ENCODE measurements at regions of chr4 and their contacts with region 1.

Region 1: GRCh38 chr4:128809477-128810330 is at the start of gene JADE1:
- DNase-seq: peak; percentile 95
- ATAC-seq: peak; percentile 64
- H3K4me3 ChIP-seq: peak within 1 kb of the TSS; percentile 84
- H3K27ac ChIP-seq: peak within 1 kb of the TSS; percentile 95
- H3K4me1 ChIP-seq: no peaks in the 10 kb centered on the region
- H3K27me3 ChIP-seq: no peaks in the 10 kb centered on the region
- CTCF ChIP-seq: peak; percentile 93
- POLR2A ChIP-seq: peak; percentile 59
- RAD21 ChIP-seq: peak; percentile 85
- total RNA-seq, gene JADE1: 32.6 and 32.8 TPM in 2 replicates

Region 2: GRCh38 chr4:127000110-127000509 is 1809.6 kb before region 1 on chr4:
- CTCF ChIA-PET with region 1: no interaction called
- POLR2A ChIA-PET with region 1: no interaction called
- dilution Hi-C with region 1: no loop called
- in situ Hi-C with region 1: no loop called
- intact Hi-C with region 1: no loop called
- DNase-seq: peak; percentile 59
- ATAC-seq: peak; percentile 53; the same call in 1 of the 2 replicates
- H3K4me3 ChIP-seq: no peak overlapping the region
- H3K27ac ChIP-seq: no peak overlapping the region
- H3K4me1 ChIP-seq: no peaks in the 10 kb centered on the region
- H3K27me3 ChIP-seq: no peaks in the 10 kb centered on the region
- CTCF ChIP-seq: no peak
- POLR2A ChIP-seq: no peak
- RAD21 ChIP-seq: no peak

Region 3: GRCh38 chr4:128287871-128288688 is 521.6 kb before region 1 on chr4:
- CTCF ChIA-PET with region 1: no interaction called
- POLR2A ChIA-PET with region 1: no interaction called
- dilution Hi-C with region 1: no loop called
- in situ Hi-C with region 1: no loop called
- intact Hi-C with region 1: loop called (anchors 1 kb)
- DNase-seq: peak; percentile 99
- ATAC-seq: peak; percentile 92
- H3K4me3 ChIP-seq: peak overlapping the region; percentile 65
- H3K27ac ChIP-seq: peak overlapping the region; percentile 90
- H3K4me1 ChIP-seq: peaks cover 4% of the 10 kb centered on the region; the same call in 1 of the 2 replicates
- H3K27me3 ChIP-seq: no peaks in the 10 kb centered on the region
- CTCF ChIP-seq: peak; percentile 28; the same call in 1 of the 2 replicates
- POLR2A ChIP-seq: peak; percentile 70
- RAD21 ChIP-seq: peak; percentile 37

Region 4: GRCh38 chr4:128454281-128455075 is 355.2 kb before region 1 on chr4:
- CTCF ChIA-PET with region 1: no interaction called
- POLR2A ChIA-PET with region 1: no interaction called
- dilution Hi-C with region 1: no loop called
- in situ Hi-C with region 1: no loop called
- intact Hi-C with region 1: loop called (anchors 1 kb)
- DNase-seq: peak; percentile 97
- ATAC-seq: peak; percentile 95
- H3K4me3 ChIP-seq: peak overlapping the region; percentile 10; the same call in 1 of the 2 replicates
- H3K27ac ChIP-seq: peak overlapping the region; percentile 77
- H3K4me1 ChIP-seq: peaks cover 20% of the 10 kb centered on the region
- H3K27me3 ChIP-seq: no peaks in the 10 kb centered on the region
- CTCF ChIP-seq: peak; percentile 95
- POLR2A ChIP-seq: peak; percentile 44; the same call in 1 of the 2 replicates
- RAD21 ChIP-seq: peak; percentile 98

Region 5: GRCh38 chr4:128517739-128518510 is 291.8 kb before region 1 on chr4:
- CTCF ChIA-PET with region 1: no interaction called
- POLR2A ChIA-PET with region 1: no interaction called
- dilution Hi-C with region 1: no loop called
- in situ Hi-C with region 1: no loop called
- intact Hi-C with region 1: loop called (anchors 1 kb)
- DNase-seq: peak; percentile 98
- ATAC-seq: peak; percentile 89
- H3K4me3 ChIP-seq: no peak overlapping the region
- H3K27ac ChIP-seq: peak overlapping the region; percentile 94
- H3K4me1 ChIP-seq: peaks cover 26% of the 10 kb centered on the region
- H3K27me3 ChIP-seq: no peaks in the 10 kb centered on the region
- CTCF ChIP-seq: no peak
- POLR2A ChIP-seq: peak; percentile 28; the same call in 1 of the 2 replicates
- RAD21 ChIP-seq: no peak

Region 6: GRCh38 chr4:128600996-128601871 is 208.5 kb before region 1 on chr4:
- CTCF ChIA-PET with region 1: no interaction called
- POLR2A ChIA-PET with region 1: interaction called, 10 read pairs
- dilution Hi-C with region 1: no loop called
- in situ Hi-C with region 1: no loop called
- intact Hi-C with region 1: no loop called
- DNase-seq: peak; percentile 97
- ATAC-seq: peak; percentile 87
- H3K4me3 ChIP-seq: no peak overlapping the region
- H3K27ac ChIP-seq: peak overlapping the region; percentile 52
- H3K4me1 ChIP-seq: peaks cover 15% of the 10 kb centered on the region
- H3K27me3 ChIP-seq: no peaks in the 10 kb centered on the region
- CTCF ChIP-seq: no peak
- POLR2A ChIP-seq: no peak
- RAD21 ChIP-seq: no peak; the same call in 1 of the 2 replicates

Measured in IMR-90 (cell line).